Activated CD4-positive, alpha-beta T cell treated with anti-CD3 and anti-CD28 coated beads, Interleukin-2, amount 10 ng/mL, durations not matched to agents 24 days and 14 days (primary cell): ENCODE measurements at regions of chr2 and their contacts with region 1.

Region 1: DNA sequence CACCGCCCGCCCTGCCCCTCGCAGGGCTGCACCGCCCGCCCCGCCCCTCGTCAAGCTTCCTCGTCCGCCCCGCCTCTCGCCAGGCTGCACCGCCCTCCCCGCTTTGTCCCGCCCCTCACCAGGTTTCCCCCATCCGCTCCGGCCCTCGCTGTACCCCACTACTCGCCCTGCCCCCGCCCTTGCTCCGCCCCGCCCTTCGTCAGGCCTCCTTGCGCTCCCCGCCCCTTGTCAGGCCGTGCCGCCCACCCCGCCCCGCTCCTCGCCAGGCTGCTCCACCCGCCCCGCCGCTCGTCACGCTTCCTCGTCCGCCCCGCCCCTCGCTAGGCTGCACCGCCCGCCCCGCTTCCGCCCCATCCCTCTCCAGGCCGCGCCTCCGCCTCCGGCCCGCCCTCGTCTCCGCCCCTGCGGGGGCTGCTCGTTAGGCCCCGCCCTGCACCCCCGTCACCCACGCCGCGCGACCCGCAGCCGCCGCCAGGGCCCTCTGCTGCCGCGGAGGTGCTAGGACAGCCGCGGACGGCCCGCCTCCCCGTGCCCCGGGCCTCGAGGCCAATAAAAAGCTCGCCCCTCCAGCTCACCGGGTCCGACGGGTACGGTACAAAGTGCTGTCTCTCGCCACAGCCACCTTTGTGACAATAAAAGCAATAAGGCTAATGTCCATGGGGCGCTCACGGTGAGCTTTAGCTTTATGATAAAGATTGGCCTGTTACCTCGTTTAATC is 574 bp upstream of the DNPEP start:
- DNase-seq: peak; percentile 99
- H3K4me3 Mint-ChIP-seq: peak overlapping the region; percentile 75
- H3K27ac Mint-ChIP-seq: peak overlapping the region; percentile 84
- H3K4me1 Mint-ChIP-seq: peaks cover 12% of the 10 kb centered on the region
- H3K27me3 Mint-ChIP-seq: peaks cover 9% of the 10 kb centered on the region

Region 2: GRCh38 chr2:218216674-218217359 is 1171.5 kb before region 1 on chr2 and contains the start of gene ARPC2:
- intact Hi-C with region 1: loop called (anchors 2 kb)
- DNase-seq: peak; percentile 99
- H3K4me3 Mint-ChIP-seq: peak within 1 kb of the TSS; percentile 89
- H3K27ac Mint-ChIP-seq: peak within 1 kb of the TSS; percentile 94
- H3K4me1 Mint-ChIP-seq: peaks cover 37% of the 10 kb centered on the region
- H3K27me3 Mint-ChIP-seq: peaks cover 4% of the 10 kb centered on the region
- total RNA-seq, gene ARPC2: 515 and 516 TPM in 2 replicates

Region 3: GRCh38 chr2:218659258-218659987 is 728.9 kb before region 1 on chr2 and contains the starts of genes BCS1L and ZNF142:
- intact Hi-C with region 1: loop called (anchors 5 kb)
- DNase-seq: peak; percentile 98
- H3K4me3 Mint-ChIP-seq: peak within 1 kb of the TSS; percentile 98
- H3K27ac Mint-ChIP-seq: peak within 1 kb of the TSS; percentile 95
- H3K4me1 Mint-ChIP-seq: peaks cover 31% of the 10 kb centered on the region
- H3K27me3 Mint-ChIP-seq: no peaks in the 10 kb centered on the region
- total RNA-seq, gene BCS1L: 92.9 and 94.4 TPM in 2 replicates
- total RNA-seq, gene ZNF142: 59.6 and 60.9 TPM in 2 replicates

Region 4: GRCh38 chr2:219206442-219207253 is 181.6 kb before region 1 on chr2 and contains the start of gene ZFAND2B:
- intact Hi-C with region 1: loop called (anchors 1 kb)
- DNase-seq: peak; percentile 99
- H3K4me3 Mint-ChIP-seq: peak within 1 kb of the TSS; percentile 83
- H3K27ac Mint-ChIP-seq: peak within 1 kb of the TSS; percentile 92
- H3K4me1 Mint-ChIP-seq: peaks cover 35% of the 10 kb centered on the region
- H3K27me3 Mint-ChIP-seq: no peaks in the 10 kb centered on the region
- total RNA-seq, gene ZFAND2B: 36.7 and 37.4 TPM in 2 replicates

Region 5: DNA sequence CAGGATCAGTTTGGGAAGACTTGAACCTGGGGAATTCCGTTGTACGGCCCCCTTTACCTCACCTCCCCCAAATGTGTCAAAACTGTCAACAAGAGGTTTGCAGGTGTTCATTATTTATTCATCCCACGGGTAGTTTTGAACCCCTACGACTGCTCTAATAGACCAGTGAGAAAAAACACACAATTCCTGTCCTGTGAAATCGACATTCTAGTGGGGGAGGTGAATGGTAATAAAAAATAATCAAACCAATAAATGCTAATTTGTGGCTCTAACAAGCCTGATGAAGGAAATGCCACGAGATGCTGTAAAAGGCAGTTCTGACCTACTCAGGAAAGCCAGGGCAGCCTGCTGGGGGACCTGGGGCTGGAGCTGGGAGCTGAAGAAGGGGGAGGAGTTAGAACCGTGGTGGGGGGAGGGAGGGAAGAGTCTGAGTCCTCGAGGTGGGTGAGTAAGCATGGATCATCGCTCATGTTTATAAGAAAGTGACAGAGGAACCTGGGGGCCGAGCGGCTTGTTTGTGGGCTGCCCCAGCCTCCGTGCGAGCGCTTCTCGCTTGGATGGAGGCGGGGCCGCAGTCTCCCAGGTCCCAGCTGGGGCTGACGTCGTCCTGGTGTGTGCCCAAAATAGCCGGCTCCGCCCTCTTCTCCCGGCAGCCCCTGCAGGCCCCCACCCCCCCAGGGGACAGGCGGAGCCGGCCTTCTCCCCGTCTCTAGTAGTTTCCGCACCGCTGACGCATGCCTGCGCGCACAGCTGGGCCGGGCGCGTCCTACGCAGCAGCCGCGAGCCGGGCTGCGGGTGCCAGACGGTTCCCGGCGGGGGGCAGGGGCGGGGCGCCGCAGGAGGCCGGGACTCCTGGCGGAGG is 109.4 kb before region 1 on chr2 and contains the start of gene DNAJB2:
- intact Hi-C with region 1: loop called (anchors 1 kb)
- DNase-seq: peak; percentile 100
- H3K4me3 Mint-ChIP-seq: peak within 1 kb of the TSS; percentile 97
- H3K27ac Mint-ChIP-seq: peak within 1 kb of the TSS; percentile 96
- H3K4me1 Mint-ChIP-seq: peaks cover 42% of the 10 kb centered on the region
- H3K27me3 Mint-ChIP-seq: no peaks in the 10 kb centered on the region
- total RNA-seq, gene DNAJB2: 49.7 and 52.4 TPM in 2 replicates

Region 6: GRCh38 chr2:219484343-219485200 is 96.3 kb after region 1 on chr2:
- intact Hi-C with region 1: no loop called
- DNase-seq: no peak
- H3K4me3 Mint-ChIP-seq: no peak overlapping the region
- H3K27ac Mint-ChIP-seq: no peak overlapping the region
- H3K4me1 Mint-ChIP-seq: no peaks in the 10 kb centered on the region
- H3K27me3 Mint-ChIP-seq: peaks cover 46% of the 10 kb centered on the region

Region 7: GRCh38 chr2:219498280-219499057 is 110.2 kb after region 1 on chr2 and contains the start of gene GMPPA:
- intact Hi-C with region 1: loop called (anchors 1 kb)
- DNase-seq: peak; percentile 99
- H3K4me3 Mint-ChIP-seq: peak within 1 kb of the TSS; percentile 97
- H3K27ac Mint-ChIP-seq: peak within 1 kb of the TSS; percentile 83
- H3K4me1 Mint-ChIP-seq: peaks cover 26% of the 10 kb centered on the region
- H3K27me3 Mint-ChIP-seq: peaks cover 39% of the 10 kb centered on the region
- total RNA-seq, gene GMPPA: 45.5 and 46.0 TPM in 2 replicates

Region 8: GRCh38 chr2:219597552-219598307 is 209.4 kb after region 1 on chr2 and contains the start of gene STK11IP:
- intact Hi-C with region 1: loop called (anchors 1 kb)
- DNase-seq: peak; percentile 98
- H3K4me3 Mint-ChIP-seq: peak within 1 kb of the TSS; percentile 98
- H3K27ac Mint-ChIP-seq: peak within 1 kb of the TSS; percentile 98
- H3K4me1 Mint-ChIP-seq: peaks cover 22% of the 10 kb centered on the region
- H3K27me3 Mint-ChIP-seq: peaks cover 2% of the 10 kb centered on the region
- total RNA-seq, gene STK11IP: 32.6 and 35.0 TPM in 2 replicates